ENCODE measurements at regions of chr1 and their contacts with region 1.

Region 1: DNA sequence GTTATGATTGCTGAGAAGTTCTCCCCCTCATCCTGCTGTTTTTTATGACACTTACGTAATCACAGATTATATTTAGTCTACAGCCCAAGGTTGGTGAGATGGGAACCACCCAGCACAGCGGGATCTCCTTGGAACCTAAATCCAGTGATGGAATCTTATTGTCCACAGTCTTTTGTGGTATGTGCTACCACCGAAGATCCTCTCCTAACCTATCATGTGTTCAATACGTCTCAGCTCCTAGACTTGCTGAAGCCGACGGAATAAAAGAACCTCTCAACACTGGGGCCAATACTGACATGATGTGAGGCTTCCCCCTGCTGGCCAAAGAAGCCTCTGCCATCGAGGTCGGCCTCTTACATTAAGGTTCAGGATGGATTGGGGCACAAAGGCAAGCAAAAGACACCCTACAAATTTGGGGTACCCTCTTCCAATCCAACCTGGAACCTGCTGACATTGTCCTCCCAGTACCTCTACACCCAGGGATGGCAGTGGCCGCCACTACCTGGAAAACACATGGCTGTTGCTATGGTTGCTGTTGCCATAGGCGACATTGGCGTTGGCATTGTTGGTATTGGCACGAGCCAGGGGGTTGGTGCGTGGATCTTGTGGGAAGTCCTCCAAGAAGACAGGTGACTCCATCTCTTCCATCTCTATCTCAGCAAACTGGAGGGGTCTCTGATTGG is 19.4 kb upstream of the KIF21B start:
- DNase-seq: peak; percentile 49 to 84 (median 73)
- ATAC-seq: peak; percentile 98
- H3K4me3 ChIP-seq: no peak overlapping the region
- H3K4me3 Mint-ChIP-seq: no peak overlapping the region
- H3K27ac ChIP-seq: no peak overlapping the region
- H3K27ac Mint-ChIP-seq: no peak overlapping the region
- H3K4me1 ChIP-seq: no peaks in the 10 kb centered on the region
- H3K4me1 Mint-ChIP-seq: peaks cover 3% of the 10 kb centered on the region
- H3K27me3 ChIP-seq: no peaks in the 10 kb centered on the region
- H3K27me3 Mint-ChIP-seq: no peaks in the 10 kb centered on the region
- CTCF ChIP-seq: peak; percentile 81

Region 2: DNA sequence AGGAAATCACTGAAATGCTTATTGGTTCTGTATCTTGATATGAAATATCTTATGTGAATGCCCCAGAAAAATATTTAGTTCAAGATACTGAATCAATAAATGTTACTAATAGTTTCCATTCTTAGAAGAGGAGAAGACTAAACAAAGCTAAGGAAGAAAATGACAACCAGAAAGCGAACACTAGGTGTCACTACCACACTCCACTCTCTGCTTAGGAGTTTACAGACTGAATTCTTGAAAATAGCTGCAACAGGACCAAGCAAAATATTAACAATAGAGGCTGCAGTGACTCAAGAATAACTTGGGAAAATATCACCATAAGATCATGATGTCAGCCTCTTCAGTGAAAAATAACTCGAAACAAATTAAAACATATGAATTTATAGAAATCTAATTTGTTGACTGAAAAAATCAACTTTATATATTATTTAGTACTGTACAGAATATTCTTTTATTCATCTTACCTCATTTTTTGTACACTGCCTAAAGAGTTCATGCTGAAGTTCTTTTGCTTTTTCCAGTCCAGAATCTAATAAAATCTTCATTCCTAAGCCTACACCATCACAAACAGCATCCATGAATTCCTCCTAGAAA is 484.0 kb before region 1 on chr1:
- CTCF ChIA-PET with region 1: interaction called, 3 read pairs
- POLR2A ChIA-PET with region 1: no interaction called
- intact Hi-C with region 1: loop called in 1 of 2 experiments (anchors 2 kb)
- DNase-seq: peak in 2 of 9 experiments; percentile 40 to 58
- ATAC-seq: no peak
- H3K4me3 ChIP-seq: no peak overlapping the region
- H3K4me3 Mint-ChIP-seq: no peak overlapping the region
- H3K27ac ChIP-seq: no peak overlapping the region
- H3K27ac Mint-ChIP-seq: no peak overlapping the region
- H3K4me1 ChIP-seq: no peaks in the 10 kb centered on the region
- H3K4me1 Mint-ChIP-seq: no peaks in the 10 kb centered on the region
- H3K27me3 ChIP-seq: no peaks in the 10 kb centered on the region
- H3K27me3 Mint-ChIP-seq: no peaks in the 10 kb centered on the region
- CTCF ChIP-seq: peak; percentile 58

Region 3: DNA sequence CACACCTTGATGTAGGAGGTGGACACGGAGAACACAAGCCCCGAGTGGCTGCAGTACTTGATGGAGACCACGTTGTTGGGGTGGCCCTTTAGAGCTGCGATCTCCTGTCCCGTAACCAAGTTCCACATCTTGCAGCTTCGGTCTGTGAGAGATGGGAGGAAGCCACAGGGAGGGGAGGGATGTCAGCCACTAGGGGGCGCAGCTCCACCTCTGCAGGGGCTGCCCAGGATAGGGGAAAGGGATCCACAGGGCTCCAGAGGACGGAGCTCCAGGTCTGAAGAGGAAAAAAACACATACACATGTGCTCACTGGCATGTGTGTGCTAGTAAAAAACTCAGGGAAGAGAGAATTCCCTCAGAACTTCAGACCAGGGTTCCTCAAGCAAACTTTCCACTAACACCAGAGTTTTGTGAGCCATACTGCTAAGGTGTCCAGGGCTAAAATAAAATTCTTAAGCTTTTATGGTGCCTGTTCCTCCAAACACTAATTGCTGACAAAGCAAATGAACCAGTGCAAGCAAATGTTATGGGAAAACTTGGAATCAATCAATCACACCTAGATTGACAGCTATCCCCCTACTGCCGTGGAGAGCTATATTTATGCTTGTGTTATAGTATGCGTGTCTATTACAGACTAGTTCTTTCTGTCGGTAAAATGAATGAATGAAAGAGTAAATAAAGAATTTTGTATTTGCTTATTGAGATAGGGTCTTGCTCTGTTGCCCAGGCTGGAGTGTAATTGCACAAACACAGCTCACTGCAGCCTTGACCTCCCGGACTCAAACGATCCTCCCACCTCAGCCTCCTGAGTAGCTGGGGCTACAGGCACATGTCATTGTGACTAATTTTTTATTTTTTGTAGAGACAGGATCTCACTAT is 63.1 kb before region 1 on chr1:
- CTCF ChIA-PET with region 1: interaction called, 201 read pairs
- POLR2A ChIA-PET with region 1: interaction called, 3 read pairs
- intact Hi-C with region 1: loop called (anchors 1 kb)
- DNase-seq: peak; percentile 26 to 80 (median 67)
- ATAC-seq: peak; percentile 61
- H3K4me3 ChIP-seq: no peak overlapping the region
- H3K4me3 Mint-ChIP-seq: no peak overlapping the region
- H3K27ac ChIP-seq: no peak overlapping the region
- H3K27ac Mint-ChIP-seq: peak overlapping the region; percentile 23
- H3K4me1 ChIP-seq: no peaks in the 10 kb centered on the region
- H3K4me1 Mint-ChIP-seq: no peaks in the 10 kb centered on the region
- H3K27me3 ChIP-seq: no peaks in the 10 kb centered on the region
- H3K27me3 Mint-ChIP-seq: no peaks in the 10 kb centered on the region
- CTCF ChIP-seq: peak; percentile 66

Region 4: GRCh38 chr1:201016211-201016651 is 26.7 kb before region 1 on chr1:
- CTCF ChIA-PET with region 1: interaction called, 98 read pairs
- POLR2A ChIA-PET with region 1: no interaction called
- intact Hi-C with region 1: loop called in 1 of 2 experiments (anchors 1 kb)
- DNase-seq: no peak
- ATAC-seq: no peak
- H3K4me3 ChIP-seq: no peak overlapping the region
- H3K4me3 Mint-ChIP-seq: peak overlapping the region; percentile 46
- H3K27ac ChIP-seq: peak overlapping the region in 1 of 2 experiments; percentile 17
- H3K27ac Mint-ChIP-seq: no peak overlapping the region
- H3K4me1 ChIP-seq: peaks cover 98% of the 10 kb centered on the region
- H3K4me1 Mint-ChIP-seq: peaks cover 95% of the 10 kb centered on the region
- H3K27me3 ChIP-seq: no peaks in the 10 kb centered on the region
- H3K27me3 Mint-ChIP-seq: no peaks in the 10 kb centered on the region
- CTCF ChIP-seq: no peak

Region 5: DNA sequence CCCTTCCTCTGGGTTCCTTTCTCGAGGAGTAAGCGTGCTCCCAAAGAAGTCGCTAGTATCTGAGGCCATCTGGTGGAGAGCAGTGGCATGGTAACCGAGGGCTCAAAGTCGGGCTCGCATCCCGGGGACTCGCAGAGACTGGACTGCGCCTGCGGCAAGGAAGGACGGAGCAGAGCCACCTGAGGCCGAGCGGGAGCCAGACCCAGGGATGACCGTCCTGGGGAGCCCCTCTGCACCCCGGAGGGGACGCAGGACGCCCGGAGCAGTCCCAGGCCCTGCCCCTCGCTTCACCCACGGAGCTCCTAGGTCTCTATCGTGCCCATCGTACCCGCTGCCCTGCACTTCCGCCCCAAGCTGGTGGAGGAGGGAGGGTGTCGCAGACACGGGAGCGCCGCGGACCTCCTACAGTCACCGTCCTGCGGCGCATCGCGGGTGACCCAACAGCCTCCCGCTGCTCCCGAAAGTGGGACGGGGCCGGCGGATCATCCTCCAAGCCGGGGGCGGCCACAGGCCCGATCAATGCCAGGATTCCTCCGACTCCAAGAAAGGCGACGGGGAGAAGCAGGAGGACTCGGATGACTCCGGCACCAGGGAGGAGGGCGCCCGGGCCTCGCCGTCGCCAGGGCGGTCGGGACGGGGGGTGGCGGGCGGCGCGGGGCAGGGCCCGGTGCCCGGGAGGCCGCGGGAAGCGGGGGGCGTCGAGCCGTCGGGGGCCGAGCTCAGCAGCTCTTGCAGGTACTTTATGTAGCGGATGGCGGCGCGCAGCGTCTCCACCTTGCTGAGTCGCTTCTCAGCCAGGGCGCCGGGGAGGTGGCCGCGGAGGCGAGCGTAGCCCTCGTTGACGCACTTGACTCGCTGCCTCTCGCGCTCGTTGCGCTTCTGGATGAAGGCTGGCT is 71.6 kb after region 1 on chr1:
- CTCF ChIA-PET with region 1: interaction called, 5 read pairs
- POLR2A ChIA-PET with region 1: no interaction called
- intact Hi-C with region 1: loop called (anchors 2 kb)
- DNase-seq: peak; percentile 47 to 85 (median 71)
- ATAC-seq: peak; percentile 80
- H3K4me3 ChIP-seq: peak overlapping the region; percentile 67 to 87
- H3K4me3 Mint-ChIP-seq: peak overlapping the region; percentile 91
- H3K27ac ChIP-seq: peak overlapping the region; percentile 40 to 51
- H3K27ac Mint-ChIP-seq: peak overlapping the region; percentile 90
- H3K4me1 ChIP-seq: peaks cover 13% of the 10 kb centered on the region
- H3K4me1 Mint-ChIP-seq: peaks cover 29% of the 10 kb centered on the region
- H3K27me3 ChIP-seq: no peaks in the 10 kb centered on the region
- H3K27me3 Mint-ChIP-seq: no peaks in the 10 kb centered on the region
- CTCF ChIP-seq: peak; percentile 72

Measured in CD8-positive, alpha-beta T cell (primary cell).